ENCODE measurements at regions of chr1 and their contacts with region 1.

Region 1: DNA sequence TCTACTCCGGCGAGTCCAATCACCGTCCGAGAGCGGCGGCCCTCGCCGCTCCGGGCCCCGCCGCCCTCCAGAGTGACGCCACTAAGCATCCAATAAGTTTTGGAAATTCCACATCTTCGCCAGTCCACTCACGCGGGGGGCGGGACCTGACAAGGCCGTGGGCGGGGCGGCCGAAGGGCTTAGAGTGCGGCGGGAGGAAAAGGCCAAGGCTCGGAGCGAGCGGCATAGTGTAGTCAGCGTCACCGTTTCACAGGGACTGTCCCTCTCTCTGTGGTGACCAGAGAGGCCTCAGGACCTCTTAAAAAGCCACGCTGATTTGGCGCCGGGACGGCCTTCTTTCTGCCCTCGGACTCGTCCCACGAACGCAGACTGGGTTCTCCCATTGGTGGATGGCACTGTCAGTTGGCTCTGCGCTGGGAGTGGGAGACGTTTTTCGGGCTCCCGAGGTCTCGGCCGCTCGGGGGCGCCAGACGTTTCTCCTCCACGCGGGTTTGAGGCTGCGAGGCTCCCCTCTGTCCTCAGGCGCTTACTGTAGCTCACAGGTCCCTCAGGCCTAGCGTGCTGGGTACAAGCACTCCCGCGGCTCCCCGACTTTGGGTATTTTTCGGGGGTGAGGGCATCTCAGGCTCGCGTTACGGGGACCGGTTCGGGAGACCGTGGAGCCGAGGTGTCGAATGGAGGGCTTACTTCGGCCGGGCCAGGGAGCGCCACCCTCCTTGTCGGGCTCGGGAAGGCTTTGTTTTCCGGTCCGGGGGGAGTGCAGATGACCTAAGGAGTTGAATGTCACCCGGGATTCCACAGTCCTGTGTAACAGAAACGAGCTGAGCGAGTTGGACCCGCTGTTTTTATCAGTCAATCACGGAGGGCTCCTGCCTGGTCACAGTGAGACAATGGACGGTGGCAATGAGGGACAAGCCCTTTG is 488 bp upstream of the TRIM45 start:
- DNase-seq: peak; percentile 94 to 98 (median 97)
- H3K4me3 ChIP-seq: peak overlapping the region; percentile 51 to 95 (median 78)
- H3K27ac ChIP-seq: peak overlapping the region; percentile 72 to 99 (median 95)
- H3K27me3 ChIP-seq: no peaks in the 10 kb centered on the region
- CTCF ChIP-seq: peak; percentile 51 to 90 (median 78)

Region 2: DNA sequence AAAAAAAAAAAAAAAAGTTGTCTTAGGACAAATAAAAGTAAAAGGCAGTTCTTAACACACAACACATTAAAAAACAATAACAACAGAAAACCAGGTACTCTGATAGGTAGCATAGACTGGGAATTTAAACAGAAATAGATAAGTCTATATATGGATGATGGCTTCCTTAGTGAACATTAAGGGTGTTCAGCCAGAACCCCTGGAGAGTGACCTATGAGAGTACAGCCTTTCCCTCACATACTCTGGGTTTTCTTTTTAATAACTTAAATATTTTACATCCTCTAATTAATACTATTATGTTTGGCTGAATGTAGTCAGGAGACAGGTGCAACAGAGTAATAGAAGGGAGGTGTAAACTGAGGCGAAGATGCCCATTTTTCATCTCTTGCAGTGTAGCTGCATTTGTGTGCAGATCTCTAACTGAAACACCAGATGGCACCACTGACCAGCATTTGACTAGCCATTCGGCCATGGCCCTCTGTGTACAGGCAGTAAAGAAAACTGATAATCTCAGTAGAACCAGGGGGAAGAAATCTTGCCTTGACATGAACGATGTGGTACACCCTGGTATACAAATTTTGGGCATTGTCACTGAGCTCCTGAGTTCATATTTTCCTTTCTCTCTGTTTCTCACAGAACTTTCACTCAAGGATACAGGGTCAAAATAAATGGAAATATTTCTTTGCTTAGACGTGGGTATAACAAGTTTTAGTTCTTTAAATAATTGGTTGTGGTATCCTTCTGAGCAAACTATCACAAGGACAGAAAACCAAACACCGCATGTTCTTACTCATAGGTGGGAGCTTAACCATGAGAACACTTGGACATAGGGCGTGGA is 54.3 kb before region 1 on chr1:
- intact Hi-C with region 1: loop called (anchors 2 kb)
- DNase-seq: peak; percentile 31 to 78 (median 70)
- H3K4me3 ChIP-seq: no peak overlapping the region
- H3K27ac ChIP-seq: no peak overlapping the region
- H3K27me3 ChIP-seq: no peaks in the 10 kb centered on the region
- CTCF ChIP-seq: peak; percentile 46 to 99 (median 93)

Region 3: GRCh38 chr1:117284399-117285215 is 162.6 kb after region 1 on chr1:
- intact Hi-C with region 1: loop called (anchors 5 kb)
- DNase-seq: no peak
- H3K4me3 ChIP-seq: no peak overlapping the region
- H3K27ac ChIP-seq: no peak overlapping the region
- H3K27me3 ChIP-seq: no peaks in the 10 kb centered on the region
- CTCF ChIP-seq: peak in 55 of 56 donors; percentile 27 to 83 (median 63)

Region 4: GRCh38 chr1:117929173-117929989 is 807.3 kb after region 1 on chr1 and contains the starts of genes GDAP2 and WDR3:
- intact Hi-C with region 1: loop called in 1 of 2 experiments (anchors 2 kb)
- DNase-seq: peak; percentile 96 to 98 (median 97)
- H3K4me3 ChIP-seq: peak within 1 kb of the TSS; percentile 64 to 99 (median 93)
- H3K27ac ChIP-seq: peak within 1 kb of the TSS in 56 of 59 donors; percentile 7 to 92 (median 76)
- H3K27me3 ChIP-seq: no peaks in the 10 kb centered on the region
- CTCF ChIP-seq: peak in 8 of 56 donors; percentile 2 to 33 (median 12)
- total RNA-seq, gene GDAP2: 35.6 to 66.1 (median 48.2) TPM
- total RNA-seq, gene WDR3: 6.8 to 23.9 (median 14.0) TPM